Activated CD8-positive, alpha-beta T cell treated with anti-CD3 and anti-CD28 coated beads for 36 hours (primary cell): ENCODE measurements at regions of chr10 and their contacts with region 1.

Region 1: DNA sequence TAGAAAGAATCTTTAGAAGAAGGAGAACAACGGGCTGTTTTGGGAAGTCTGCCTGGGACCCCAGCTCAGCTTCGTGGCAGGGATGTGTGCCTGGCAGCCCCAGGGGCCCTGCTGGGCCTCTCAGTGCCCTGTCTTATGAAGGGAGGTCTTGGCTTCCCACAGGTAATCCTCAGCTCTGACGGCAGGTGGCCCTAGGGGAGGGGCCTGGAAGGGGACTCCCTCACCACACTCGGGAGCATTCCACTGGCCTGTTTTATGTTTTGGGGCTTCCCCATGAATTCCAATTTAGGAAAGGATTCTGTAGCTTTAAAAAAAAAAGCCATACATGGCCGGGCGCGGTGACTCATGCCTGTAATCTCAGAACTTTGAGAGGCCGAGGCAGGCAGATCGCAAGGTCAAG is 3.0 kb upstream of the DMBT1 start:
- DNase-seq: no peak
- ATAC-seq: no peak
- H3K4me3 Mint-ChIP-seq: no peak overlapping the region
- H3K27ac Mint-ChIP-seq: no peak overlapping the region
- H3K4me1 Mint-ChIP-seq: peaks cover 24% of the 10 kb centered on the region
- H3K27me3 Mint-ChIP-seq: peaks cover 10% of the 10 kb centered on the region
- CTCF ChIP-seq: no peak

Region 2: DNA sequence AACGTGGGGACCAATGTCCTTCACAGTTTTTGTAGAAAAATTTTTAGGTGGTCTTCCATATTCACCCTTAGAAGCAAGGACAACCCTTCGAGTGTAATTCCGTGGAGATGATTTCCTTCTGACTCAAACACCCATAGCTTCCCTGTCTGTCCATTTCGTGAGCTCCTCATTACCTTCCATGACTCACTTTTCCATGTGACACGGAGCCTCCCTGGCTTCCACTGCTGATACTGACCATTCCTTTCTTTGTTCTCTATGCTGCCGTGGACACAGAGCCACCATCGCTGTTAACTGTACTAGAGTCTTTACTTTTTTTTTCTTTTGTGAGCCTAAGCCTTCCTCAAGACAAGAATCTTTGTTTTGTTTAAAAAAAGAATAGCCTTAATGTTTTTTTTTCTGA is 115.6 kb before region 1 on chr10:
- CTCF ChIA-PET with region 1: no interaction called
- POLR2A ChIA-PET with region 1: no interaction called
- intact Hi-C with region 1: no loop called
- DNase-seq: no peak
- ATAC-seq: no peak
- H3K4me3 Mint-ChIP-seq: no peak overlapping the region
- H3K27ac Mint-ChIP-seq: no peak overlapping the region
- H3K4me1 Mint-ChIP-seq: no peaks in the 10 kb centered on the region
- H3K27me3 Mint-ChIP-seq: peaks cover 2% of the 10 kb centered on the region
- CTCF ChIP-seq: no peak

Region 3: GRCh38 chr10:122515588-122516231 is 41.8 kb before region 1 on chr10:
- CTCF ChIA-PET with region 1: interaction called, 3 read pairs
- POLR2A ChIA-PET with region 1: interaction called, 3 read pairs
- intact Hi-C with region 1: loop called (anchors 5 kb)
- DNase-seq: peak; percentile 91
- ATAC-seq: peak; percentile 93
- H3K4me3 Mint-ChIP-seq: no peak overlapping the region
- H3K27ac Mint-ChIP-seq: no peak overlapping the region
- H3K4me1 Mint-ChIP-seq: peaks cover 43% of the 10 kb centered on the region
- H3K27me3 Mint-ChIP-seq: peaks cover 9% of the 10 kb centered on the region
- CTCF ChIP-seq: no peak